HCT116 (cell line): ENCODE measurements at regions of chr14 and their contacts with region 1.

Region 1: GRCh38 chr14:72962829-72963312 is 36.6 kb downstream of the DCAF4 start:
- DNase-seq: peak; percentile 92
- ATAC-seq: peak; percentile 75
- H3K4me3 ChIP-seq: peak overlapping the region in 1 of 2 experiments; percentile 11; a peak in 1 of 4 replicates
- H3K27ac ChIP-seq: peak overlapping the region; percentile 71
- H3K4me1 ChIP-seq: peaks cover 28 to 54% of the 10 kb centered on the region in 2 experiments
- H3K27me3 ChIP-seq: no peaks in the 10 kb centered on the region
- CTCF ChIP-seq: no peak
- POLR2A ChIP-seq: no peak
- RAD21 ChIP-seq: no peak

Region 2: GRCh38 chr14:72926292-72927028 is 36.4 kb before region 1 on chr14 and contains the start of gene DCAF4:
- CTCF ChIA-PET with region 1: no interaction called
- POLR2A ChIA-PET with region 1: interaction called, 8 read pairs
- RAD21 ChIA-PET with region 1: no interaction called
- intact Hi-C with region 1: loop called (anchors 2 kb)
- DNase-seq: peak; percentile 97
- ATAC-seq: peak; percentile 95
- H3K4me3 ChIP-seq: peak within 1 kb of the TSS; percentile 66 to 75
- H3K27ac ChIP-seq: peak within 1 kb of the TSS; percentile 50
- H3K4me1 ChIP-seq: peaks cover 3 to 26% of the 10 kb centered on the region in 2 experiments; a peak in 3 of 4 replicates
- H3K27me3 ChIP-seq: no peaks in the 10 kb centered on the region
- CTCF ChIP-seq: no peak
- POLR2A ChIP-seq: peak; percentile 15
- RAD21 ChIP-seq: no peak
- total RNA-seq, gene DCAF4: 19.3 TPM

Region 3: GRCh38 chr14:72948481-72949138 is 14.3 kb before region 1 on chr14:
- CTCF ChIA-PET with region 1: interaction called, 19 read pairs
- POLR2A ChIA-PET with region 1: no interaction called
- RAD21 ChIA-PET with region 1: no interaction called
- intact Hi-C with region 1: no loop called
- DNase-seq: peak; percentile 27
- ATAC-seq: peak; percentile 85
- H3K4me3 ChIP-seq: no peak overlapping the region
- H3K27ac ChIP-seq: no peak overlapping the region
- H3K4me1 ChIP-seq: no peaks in the 10 kb centered on the region
- H3K27me3 ChIP-seq: no peaks in the 10 kb centered on the region
- CTCF ChIP-seq: peak; percentile 59 to 89 (median 84); a peak in 5 of 6 replicates
- POLR2A ChIP-seq: no peak
- RAD21 ChIP-seq: peak; percentile 63

Region 4: GRCh38 chr14:73026845-73027542 is 64.1 kb after region 1 on chr14 and contains the start of gene ZFYVE1:
- CTCF ChIA-PET with region 1: interaction called, 3 read pairs
- POLR2A ChIA-PET with region 1: interaction called, 10 read pairs
- RAD21 ChIA-PET with region 1: no interaction called
- intact Hi-C with region 1: loop called (anchors 5 kb)
- DNase-seq: peak; percentile 95
- ATAC-seq: peak; percentile 99
- H3K4me3 ChIP-seq: peak within 1 kb of the TSS; percentile 67 to 84
- H3K27ac ChIP-seq: peak within 1 kb of the TSS; percentile 28; the same call in 1 of the 2 replicates
- H3K4me1 ChIP-seq: peaks cover 3 to 22% of the 10 kb centered on the region in 2 experiments; a peak in 3 of 4 replicates
- H3K27me3 ChIP-seq: no peaks in the 10 kb centered on the region
- CTCF ChIP-seq: no peak
- POLR2A ChIP-seq: no peak
- RAD21 ChIP-seq: no peak
- total RNA-seq, gene ZFYVE1: 7.7 TPM

Region 5: GRCh38 chr14:73526569-73526968 is 563.7 kb after region 1 on chr14:
- CTCF ChIA-PET with region 1: no interaction called
- POLR2A ChIA-PET with region 1: no interaction called
- RAD21 ChIA-PET with region 1: no interaction called
- intact Hi-C with region 1: no loop called
- DNase-seq: no peak
- ATAC-seq: no peak
- H3K4me3 ChIP-seq: no peak overlapping the region
- H3K27ac ChIP-seq: no peak overlapping the region
- H3K4me1 ChIP-seq: peaks cover 4 to 6% of the 10 kb centered on the region in 2 experiments; a peak in 3 of 4 replicates
- H3K27me3 ChIP-seq: no peaks in the 10 kb centered on the region
- CTCF ChIP-seq: no peak
- POLR2A ChIP-seq: no peak
- RAD21 ChIP-seq: no peak